ENCODE measurements at regions of chr9 and their contacts with region 1.

Region 1: GRCh38 chr9:90219548-90220118 is 423.0 kb downstream of the DIRAS2 start:
- DNase-seq: peak; percentile 28 to 30
- H3K4me3 ChIP-seq: no peak overlapping the region
- H3K27ac ChIP-seq: no peak overlapping the region
- H3K4me1 ChIP-seq: no peaks in the 10 kb centered on the region
- H3K27me3 ChIP-seq: no peaks in the 10 kb centered on the region
- CTCF ChIP-seq: peak in 4 of 6 experiments; percentile 16 to 53 (median 44)
- POLR2A ChIP-seq: no peak

Region 2: DNA sequence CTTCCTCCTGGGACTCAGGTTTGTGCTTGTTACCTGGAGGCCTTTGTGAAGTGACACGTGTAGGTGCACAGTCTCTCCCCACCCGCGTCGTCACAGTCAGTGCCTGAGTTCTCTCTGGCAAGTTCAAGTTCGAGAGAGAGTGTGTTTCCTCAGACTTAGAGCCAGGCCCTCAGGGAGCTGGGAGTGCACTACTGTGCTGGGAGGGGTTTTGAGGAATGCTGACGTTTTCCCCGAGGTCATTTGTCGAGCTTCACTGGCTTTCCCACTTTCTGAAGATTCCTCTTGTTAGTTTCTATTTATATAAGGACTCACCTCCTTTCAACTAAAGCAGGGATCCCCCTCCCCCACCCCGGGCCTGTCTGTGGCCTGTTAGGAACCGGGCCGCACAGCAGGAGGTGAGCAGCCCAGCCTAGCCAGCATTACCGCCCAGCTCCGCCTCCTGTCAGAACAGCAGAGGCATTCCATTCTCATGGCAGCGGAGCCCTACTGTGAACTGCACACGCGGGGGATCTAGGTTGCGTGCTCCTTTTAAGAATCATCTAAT is 213.8 kb after region 1 on chr9:
- intact Hi-C with region 1: no loop called
- DNase-seq: peak; percentile 98 to 99
- H3K4me3 ChIP-seq: no peak overlapping the region
- H3K27ac ChIP-seq: peak overlapping the region; percentile 80 to 91 (median 89)
- H3K4me1 ChIP-seq: peaks cover 10 to 11% of the 10 kb centered on the region in 2 donors
- H3K27me3 ChIP-seq: no peaks in the 10 kb centered on the region
- CTCF ChIP-seq: peak in 2 of 6 experiments; percentile 24 to 30
- POLR2A ChIP-seq: peak in 1 of 2 donors; percentile 93

Region 3: GRCh38 chr9:90642570-90643539 is 423.2 kb after region 1 on chr9 and contains the start of gene DIRAS2:
- intact Hi-C with region 1: loop called (anchors 10 kb)
- DNase-seq: peak; percentile 96
- H3K4me3 ChIP-seq: peak within 1 kb of the TSS in 2 of 3 donors; percentile 30 to 54
- H3K27ac ChIP-seq: peak within 1 kb of the TSS; percentile 74 to 89 (median 80)
- H3K4me1 ChIP-seq: peaks cover 0 to 12% of the 10 kb centered on the region in 2 donors
- H3K27me3 ChIP-seq: no peaks in the 10 kb centered on the region
- CTCF ChIP-seq: peak; percentile 14 to 80 (median 58)
- POLR2A ChIP-seq: peak; percentile 26 to 98
- total RNA-seq, gene DIRAS2: 2.6 to 11.3 (median 6.6) TPM

Region 4: DNA sequence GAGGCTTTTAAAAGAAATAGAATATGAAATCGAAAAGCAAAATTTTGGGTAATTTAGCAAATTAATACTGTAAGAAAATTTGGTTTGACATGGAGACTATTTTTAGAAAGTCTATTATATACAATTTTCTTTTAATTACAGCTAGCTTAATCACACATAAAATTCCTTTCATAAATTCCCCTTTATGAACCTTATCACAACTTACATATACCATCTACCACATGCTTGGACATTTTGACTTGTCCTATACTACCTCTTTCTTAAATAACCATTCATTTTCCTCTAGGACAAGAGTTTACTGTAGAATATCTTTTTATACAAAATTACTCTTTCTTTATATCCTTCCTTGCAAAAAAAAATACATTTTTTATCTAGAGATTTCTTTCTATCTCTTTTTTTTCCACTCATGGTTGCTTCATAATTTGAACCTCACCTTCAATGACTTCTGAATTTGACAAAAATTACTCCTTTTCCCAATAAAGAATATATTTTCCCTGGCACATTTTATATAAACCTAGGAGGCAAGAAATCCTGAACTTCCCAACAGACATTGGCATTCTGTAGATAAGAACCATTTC is 548.0 kb after region 1 on chr9:
- intact Hi-C with region 1: loop called (anchors 5 kb)
- DNase-seq: no peak
- H3K4me3 ChIP-seq: no peak overlapping the region
- H3K27ac ChIP-seq: no peak overlapping the region
- H3K4me1 ChIP-seq: no peaks in the 10 kb centered on the region
- H3K27me3 ChIP-seq: no peaks in the 10 kb centered on the region
- CTCF ChIP-seq: no peak
- POLR2A ChIP-seq: no peak

Region 5: DNA sequence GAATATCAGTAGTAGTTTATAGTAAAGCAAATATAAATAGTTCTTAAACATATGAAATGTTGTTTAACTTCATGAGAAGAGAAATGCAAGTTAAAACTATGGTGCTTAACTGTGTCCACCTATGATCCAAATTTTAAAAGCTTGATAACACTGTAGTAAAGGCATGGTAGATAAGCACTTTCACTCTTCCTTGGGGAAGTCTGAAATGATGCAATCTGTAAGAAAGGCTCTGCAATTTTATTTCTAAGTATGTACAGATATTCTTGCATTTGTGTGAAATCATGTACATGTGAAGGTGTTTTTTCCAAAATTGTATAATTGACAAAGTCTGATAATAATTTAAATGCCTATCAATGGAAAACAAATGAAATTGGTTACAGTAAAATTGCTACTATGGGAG is 648.9 kb after region 1 on chr9:
- intact Hi-C with region 1: loop called (anchors 5 kb)
- DNase-seq: no peak
- H3K4me3 ChIP-seq: no peak overlapping the region
- H3K27ac ChIP-seq: peak overlapping the region in 1 of 3 donors; percentile 16
- H3K4me1 ChIP-seq: no peaks in the 10 kb centered on the region
- H3K27me3 ChIP-seq: no peaks in the 10 kb centered on the region
- CTCF ChIP-seq: no peak
- POLR2A ChIP-seq: no peak